Esophagus muscularis mucosa (tissue), 4 donors: ENCODE measurements at regions of chr6 and their contacts with region 1.

Region 1: GRCh38 chr6:41920921-41921711 is at the starts of genes BYSL and MED20:
- DNase-seq: peak; percentile 98
- H3K4me3 ChIP-seq: peak within 1 kb of the TSS; percentile 71 to 92 (median 82)
- H3K27ac ChIP-seq: peak within 1 kb of the TSS; percentile 92 to 99 (median 94)
- H3K4me1 ChIP-seq: peaks cover 37 to 67% (median 55%) of the 10 kb centered on the region in 4 donors
- H3K27me3 ChIP-seq: no peaks in the 10 kb centered on the region
- CTCF ChIP-seq: peak; percentile 98 to 99 (median 99)
- EP300 ChIP-seq: no peak
- POLR2A ChIP-seq: peak; percentile 76
- total RNA-seq, gene BYSL: 5.8 to 11.6 (median 9.2) TPM
- total RNA-seq, gene MED20: 9.6 to 14.9 (median 14.2) TPM

Region 2: GRCh38 chr6:41787219-41787917 is 133.7 kb before region 1 on chr6 and contains the start of gene TOMM6:
- intact Hi-C with region 1: loop called (anchors 2 kb)
- DNase-seq: peak; percentile 98
- H3K4me3 ChIP-seq: peak within 1 kb of the TSS; percentile 69 to 91 (median 76)
- H3K27ac ChIP-seq: peak within 1 kb of the TSS; percentile 92 to 96 (median 94)
- H3K4me1 ChIP-seq: peaks cover 33 to 67% (median 49%) of the 10 kb centered on the region in 4 donors
- H3K27me3 ChIP-seq: no peaks in the 10 kb centered on the region
- CTCF ChIP-seq: peak; percentile 70 to 89 (median 83)
- EP300 ChIP-seq: no peak
- POLR2A ChIP-seq: no peak
- total RNA-seq, gene TOMM6: 52.1 to 117 (median 86.9) TPM

Region 3: DNA sequence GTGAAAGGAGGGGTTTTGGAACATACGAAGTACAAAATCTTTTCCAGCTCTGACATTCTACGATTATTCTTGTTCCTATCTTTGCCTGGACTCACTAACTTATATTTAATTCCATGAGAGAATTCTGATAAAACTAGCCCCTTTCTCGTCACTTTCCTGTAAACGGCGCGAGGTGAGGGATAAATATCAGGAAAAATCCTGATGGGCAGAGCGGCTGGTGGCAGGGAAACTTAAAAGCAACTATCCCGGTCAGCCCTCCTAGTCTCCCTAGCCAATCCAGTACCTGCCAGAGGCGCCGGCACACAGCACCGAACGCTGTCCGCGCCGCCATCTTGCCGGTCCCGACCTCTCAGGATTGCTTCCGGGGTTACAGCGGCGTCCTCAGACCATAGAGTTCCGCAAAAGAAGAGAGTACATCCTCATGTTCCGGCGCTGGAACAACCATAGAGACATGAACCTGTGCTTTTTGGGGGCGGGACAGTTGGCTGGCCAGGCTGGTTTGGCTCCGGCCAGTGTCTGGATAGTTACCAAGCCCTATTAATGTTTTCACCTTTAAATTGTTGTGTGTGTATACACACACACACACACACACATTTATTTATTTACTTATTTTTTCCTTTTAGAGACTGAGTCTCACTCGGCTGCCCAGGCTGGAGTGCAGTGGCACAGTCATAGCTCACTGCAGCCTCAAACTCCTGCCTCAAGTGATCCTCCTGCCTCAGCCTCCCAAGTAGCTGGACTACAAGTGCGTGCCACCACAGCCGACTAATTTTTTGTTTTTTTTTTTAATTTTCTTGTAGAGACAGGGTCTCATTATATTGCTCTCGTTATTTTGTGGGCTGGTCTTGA is 296.6 kb after region 1 on chr6 and contains the start of gene MRPS10:
- intact Hi-C with region 1: loop called (anchors 10 kb)
- DNase-seq: peak; percentile 98
- H3K4me3 ChIP-seq: peak within 1 kb of the TSS; percentile 65 to 77 (median 71)
- H3K27ac ChIP-seq: peak within 1 kb of the TSS; percentile 73 to 87 (median 81)
- H3K4me1 ChIP-seq: peaks cover 20 to 33% (median 29%) of the 10 kb centered on the region in 4 donors
- H3K27me3 ChIP-seq: no peaks in the 10 kb centered on the region
- CTCF ChIP-seq: peak in 1 of 3 experiments; percentile 37
- EP300 ChIP-seq: no peak
- POLR2A ChIP-seq: peak; percentile 65
- total RNA-seq, gene MRPS10: 27.8 to 38.8 (median 29.3) TPM